Cardiac septum (tissue), 1 donor: ENCODE measurements at regions of chr3 and their contacts with region 1.

Region 1: GRCh38 chr3:38496131-38496910 is at the start of gene EXOG:
- DNase-seq: peak; percentile 96
- total RNA-seq, gene EXOG: 38.6 TPM

Region 2: DNA sequence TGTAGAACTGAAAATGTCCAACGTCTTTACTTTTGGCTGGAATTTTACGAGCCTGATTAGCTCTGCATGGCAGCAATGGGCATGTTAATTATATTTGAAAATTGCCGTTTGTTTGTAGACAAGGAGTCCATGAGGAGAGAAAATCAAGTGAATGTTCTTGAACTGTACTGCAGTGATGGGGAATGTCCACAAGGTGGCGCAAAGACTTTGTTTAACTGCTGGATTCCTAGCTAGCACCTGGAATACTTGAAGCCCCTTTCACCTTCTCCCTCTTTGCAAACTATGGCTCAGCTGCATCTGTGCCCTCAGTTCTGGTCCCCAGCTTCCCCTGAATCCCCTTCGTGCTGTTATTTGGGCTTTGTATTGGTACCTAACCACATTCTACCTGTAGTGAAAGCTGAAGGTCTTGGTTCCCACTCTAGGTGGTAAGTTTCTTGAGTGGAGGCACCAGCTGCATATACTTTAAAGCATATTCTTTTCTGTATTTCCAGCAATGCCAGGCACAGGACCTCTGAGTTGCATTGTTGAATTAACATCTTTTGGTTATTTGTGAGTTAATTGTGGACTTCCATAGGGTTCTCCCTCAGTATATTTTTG is 25.2 kb after region 1 on chr3:
- intact Hi-C with region 1: loop called (anchors 2 kb)
- DNase-seq: no peak

Region 3: DNA sequence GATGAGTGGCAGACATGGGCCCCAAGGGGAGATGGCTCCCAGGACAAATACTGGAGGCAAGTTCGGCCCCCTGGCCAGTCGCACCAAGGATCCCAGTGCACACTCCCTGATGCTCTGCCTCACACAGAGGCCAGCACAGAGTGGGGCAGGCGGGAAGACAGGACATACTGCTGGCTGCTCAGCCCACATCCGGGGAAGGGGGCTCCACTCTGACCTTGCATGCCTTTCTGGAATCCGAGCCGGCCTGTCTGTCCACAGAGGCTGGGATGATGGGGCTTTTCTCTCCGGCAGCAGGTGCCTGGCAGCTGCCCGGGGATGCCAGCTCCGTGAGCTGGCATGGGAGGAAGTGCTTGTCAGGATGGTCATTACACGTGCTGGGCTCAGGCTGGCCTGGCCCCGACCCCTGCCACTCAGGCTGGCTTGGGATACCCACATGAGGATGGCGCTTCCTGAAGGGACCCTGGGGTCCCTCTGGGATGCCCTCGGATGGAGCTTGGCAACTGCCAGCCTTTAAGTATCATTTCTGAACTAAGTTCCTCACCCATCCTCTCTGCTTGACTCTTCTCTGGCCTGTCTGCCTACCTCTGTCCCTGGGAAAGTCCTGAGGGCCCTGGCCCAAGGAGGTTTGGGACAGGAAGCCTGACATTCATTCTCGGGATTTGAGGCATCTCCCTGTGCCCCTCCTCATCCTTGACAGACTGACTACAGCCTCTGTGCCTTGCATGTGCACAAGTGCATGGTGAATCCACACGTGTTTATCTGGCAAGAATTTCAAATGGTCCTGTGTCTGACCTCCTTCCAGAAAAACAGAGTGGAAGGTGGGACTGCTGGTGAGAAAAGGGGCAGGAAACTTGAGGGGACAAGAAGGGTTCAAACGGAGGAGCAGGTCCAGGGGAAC is 46.3 kb after region 1 on chr3:
- intact Hi-C with region 1: loop called (anchors 5 kb)
- DNase-seq: peak; percentile 77

Region 4: GRCh38 chr3:38651154-38651789 is 155.0 kb after region 1 on chr3:
- intact Hi-C with region 1: loop called (anchors 1 kb)
- DNase-seq: peak; percentile 90

Region 5: GRCh38 chr3:38725726-38726419 is 229.6 kb after region 1 on chr3:
- intact Hi-C with region 1: loop called (anchors 10 kb)
- DNase-seq: no peak

Region 6: DNA sequence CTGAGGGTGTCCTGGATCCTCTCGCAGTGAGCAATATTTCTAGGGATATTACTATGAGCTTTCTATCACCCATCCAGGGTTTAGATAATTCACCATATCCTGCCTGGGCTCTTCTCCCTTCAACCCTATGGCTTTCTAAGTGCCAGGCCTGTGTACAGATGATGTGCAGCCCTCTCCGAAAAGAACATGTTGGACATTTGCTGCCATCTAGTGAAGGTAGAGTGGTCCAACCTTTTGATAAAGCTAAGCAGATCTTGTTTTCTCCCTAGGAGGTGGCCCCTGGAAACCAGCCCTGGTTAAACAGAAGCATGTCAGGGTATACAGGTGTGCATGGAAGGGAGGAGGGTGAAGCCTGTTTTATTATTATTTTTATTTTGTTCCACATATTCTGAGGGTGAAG is 347.6 kb after region 1 on chr3:
- intact Hi-C with region 1: loop called (anchors 5 kb)
- DNase-seq: no peak